Common myeloid progenitor, CD34-positive (primary cell): ENCODE measurements at regions of chr11 and their contacts with region 1.

Region 1: GRCh38 chr11:117121176-117121575 is 22.9 kb upstream of the PAFAH1B2 start:
- DNase-seq: no peak
- H3K4me3 ChIP-seq: no peak overlapping the region
- H3K27ac ChIP-seq: no peak overlapping the region
- H3K4me1 ChIP-seq: no peaks in the 10 kb centered on the region
- H3K27me3 ChIP-seq: no peaks in the 10 kb centered on the region

Region 2: DNA sequence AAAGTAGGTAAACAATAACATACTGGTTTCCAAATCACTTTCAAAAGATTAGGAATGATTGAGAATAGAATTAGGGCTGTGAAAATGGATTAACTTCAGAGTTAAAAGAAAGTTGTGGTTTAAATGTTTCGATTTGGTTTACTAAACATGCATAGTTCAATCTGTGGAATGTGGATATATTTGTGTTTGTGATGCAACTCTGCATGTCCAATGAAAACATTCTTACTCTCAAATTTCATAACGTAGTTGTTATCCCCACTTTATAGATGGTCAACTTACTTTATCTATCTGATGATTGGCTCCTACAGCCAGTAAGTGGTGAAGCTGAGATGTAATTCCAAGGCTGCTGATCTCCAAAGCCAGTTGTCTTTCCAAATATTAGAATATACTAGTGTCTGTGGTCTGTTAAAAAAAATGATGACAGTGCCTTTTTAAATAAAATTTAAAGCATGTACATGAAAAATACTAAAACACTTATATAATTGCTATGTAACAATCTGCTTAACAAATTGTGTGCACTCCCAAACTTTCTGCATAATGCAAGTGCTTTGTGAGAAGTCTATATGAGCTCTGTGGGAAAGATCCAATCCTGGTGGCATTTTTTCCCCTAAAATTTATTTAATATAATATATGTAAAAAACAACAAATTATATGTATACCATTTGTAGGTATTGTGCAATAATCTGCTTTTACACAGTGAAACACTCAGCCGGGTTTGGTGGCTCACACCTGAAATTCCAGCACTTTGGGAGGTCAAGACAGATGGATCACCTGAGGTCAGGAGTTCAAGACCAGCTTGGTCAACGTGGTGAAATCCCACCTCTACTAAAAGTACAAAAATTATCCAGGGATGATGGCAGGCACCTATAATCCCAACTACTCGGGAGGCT is 13.2 kb before region 1 on chr11:
- CTCF ChIA-PET with region 1: interaction called, 27 read pairs
- POLR2A ChIA-PET with region 1: no interaction called
- DNase-seq: no peak
- H3K4me3 ChIP-seq: no peak overlapping the region
- H3K27ac ChIP-seq: no peak overlapping the region
- H3K4me1 ChIP-seq: no peaks in the 10 kb centered on the region
- H3K27me3 ChIP-seq: no peaks in the 10 kb centered on the region